Mammary epithelial cell (primary cell): ENCODE measurements at regions of chr4 and their contacts with region 1.

Region 1: GRCh38 chr4:187128222-187128621 is 404.6 kb upstream of the FAT1 start:
- DNase-seq: peak; percentile 95
- H3K4me3 ChIP-seq: peak overlapping the region; percentile 22 to 39 (median 31)
- H3K27ac ChIP-seq: peak overlapping the region; percentile 100
- H3K4me1 ChIP-seq: peaks cover 27% of the 10 kb centered on the region
- H3K27me3 ChIP-seq: no peaks in the 10 kb centered on the region
- CTCF ChIP-seq: no peak

Region 2: GRCh38 chr4:186781032-186781917 is 346.9 kb before region 1 on chr4:
- CTCF ChIA-PET with region 1: no interaction called
- dilution Hi-C with region 1: no loop called
- in situ Hi-C with region 1: no loop called
- intact Hi-C with region 1: loop called (anchors 5 kb)
- DNase-seq: peak; percentile 93
- H3K4me3 ChIP-seq: no peak overlapping the region
- H3K27ac ChIP-seq: peak overlapping the region; percentile 81
- H3K4me1 ChIP-seq: peaks cover 24% of the 10 kb centered on the region
- H3K27me3 ChIP-seq: no peaks in the 10 kb centered on the region
- CTCF ChIP-seq: no peak

Region 3: GRCh38 chr4:186904101-186904500 is 224.1 kb before region 1 on chr4:
- CTCF ChIA-PET with region 1: no interaction called
- dilution Hi-C with region 1: no loop called
- in situ Hi-C with region 1: no loop called
- intact Hi-C with region 1: loop called (anchors 5 kb)
- DNase-seq: peak; percentile 84
- H3K4me3 ChIP-seq: no peak overlapping the region
- H3K27ac ChIP-seq: peak overlapping the region; percentile 10
- H3K4me1 ChIP-seq: peaks cover 14% of the 10 kb centered on the region
- H3K27me3 ChIP-seq: no peaks in the 10 kb centered on the region
- CTCF ChIP-seq: no peak

Region 4: GRCh38 chr4:186936496-186937375 is 191.5 kb before region 1 on chr4:
- CTCF ChIA-PET with region 1: no interaction called
- dilution Hi-C with region 1: no loop called
- in situ Hi-C with region 1: no loop called
- intact Hi-C with region 1: loop called (anchors 10 kb)
- DNase-seq: peak; percentile 79
- H3K4me3 ChIP-seq: no peak overlapping the region
- H3K27ac ChIP-seq: peak overlapping the region; percentile 74
- H3K4me1 ChIP-seq: peaks cover 24% of the 10 kb centered on the region
- H3K27me3 ChIP-seq: no peaks in the 10 kb centered on the region
- CTCF ChIP-seq: peak; percentile 43 to 49

Region 5: GRCh38 chr4:187006189-187006618 is 122.0 kb before region 1 on chr4:
- CTCF ChIA-PET with region 1: no interaction called
- dilution Hi-C with region 1: no loop called
- in situ Hi-C with region 1: no loop called
- intact Hi-C with region 1: loop called (anchors 5 kb)
- DNase-seq: peak; percentile 66
- H3K4me3 ChIP-seq: peak overlapping the region in 1 of 3 experiments; percentile 11
- H3K27ac ChIP-seq: peak overlapping the region; percentile 50
- H3K4me1 ChIP-seq: peaks cover 13% of the 10 kb centered on the region
- H3K27me3 ChIP-seq: no peaks in the 10 kb centered on the region
- CTCF ChIP-seq: no peak

Region 6: GRCh38 chr4:187027272-187027671 is 101.0 kb before region 1 on chr4:
- CTCF ChIA-PET with region 1: no interaction called
- dilution Hi-C with region 1: loop called (anchors 5 kb)
- in situ Hi-C with region 1: no loop called
- intact Hi-C with region 1: no loop called
- DNase-seq: no peak
- H3K4me3 ChIP-seq: no peak overlapping the region
- H3K27ac ChIP-seq: no peak overlapping the region
- H3K4me1 ChIP-seq: no peaks in the 10 kb centered on the region
- H3K27me3 ChIP-seq: no peaks in the 10 kb centered on the region
- CTCF ChIP-seq: no peak

Region 7: DNA sequence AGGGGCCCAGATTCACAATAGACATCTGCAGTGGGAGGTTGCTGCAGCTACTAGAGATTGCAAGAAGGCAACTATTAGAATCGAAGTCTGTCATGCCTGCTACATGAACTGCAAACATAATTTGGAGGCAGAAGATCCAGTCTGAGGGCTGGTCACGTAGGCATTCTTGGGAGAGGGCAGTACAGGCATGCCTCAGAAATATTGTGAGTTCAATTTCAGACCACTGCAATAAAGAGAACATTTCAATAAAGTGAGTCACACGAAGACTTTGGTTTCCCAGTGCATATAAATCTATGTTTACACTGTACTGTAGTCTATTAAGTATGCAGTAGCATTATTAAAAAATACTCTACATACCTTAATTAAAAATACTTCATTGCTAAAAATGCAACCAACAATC is 181.2 kb after region 1 on chr4:
- CTCF ChIA-PET with region 1: no interaction called
- dilution Hi-C with region 1: no loop called
- in situ Hi-C with region 1: loop called in 1 of 2 experiments (anchors 5 kb)
- intact Hi-C with region 1: no loop called
- DNase-seq: peak; percentile 73
- H3K4me3 ChIP-seq: no peak overlapping the region
- H3K27ac ChIP-seq: peak overlapping the region; percentile 91
- H3K4me1 ChIP-seq: peaks cover 38% of the 10 kb centered on the region
- H3K27me3 ChIP-seq: no peaks in the 10 kb centered on the region
- CTCF ChIP-seq: no peak

Region 8: DNA sequence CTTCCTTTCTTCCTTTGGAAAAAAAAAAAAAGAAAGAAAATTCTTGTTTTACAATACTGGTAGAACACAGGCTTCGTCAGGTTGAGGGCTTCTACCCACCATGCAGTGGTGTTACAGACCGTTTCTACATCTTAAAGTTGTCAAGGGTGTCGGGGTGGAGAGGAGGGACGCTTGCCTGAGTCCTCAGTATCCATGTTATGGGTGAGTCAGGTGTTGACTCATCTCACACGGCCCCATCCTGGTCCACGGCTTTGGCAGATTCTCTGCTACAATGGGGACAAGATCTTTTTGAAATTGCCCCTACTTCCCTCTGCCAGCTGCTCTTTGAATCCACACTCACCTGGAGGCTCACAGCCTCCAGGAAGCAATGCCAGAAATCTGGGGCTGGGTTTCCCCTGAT is 557.0 kb after region 1 on chr4:
- CTCF ChIA-PET with region 1: no interaction called
- dilution Hi-C with region 1: no loop called
- in situ Hi-C with region 1: no loop called
- intact Hi-C with region 1: no loop called
- DNase-seq: no peak
- H3K4me3 ChIP-seq: no peak overlapping the region
- H3K27ac ChIP-seq: no peak overlapping the region
- H3K4me1 ChIP-seq: no peaks in the 10 kb centered on the region
- H3K27me3 ChIP-seq: no peaks in the 10 kb centered on the region
- CTCF ChIP-seq: no peak